GM10248 (cell line): ENCODE measurements at regions of chr2 and their contacts with region 1.

Region 1: GRCh38 chr2:20015472-20016083 is 3.1 kb upstream of the MATN3 start:
- DNase-seq: peak; percentile 58
- CTCF ChIP-seq: peak; percentile 45

Region 2: DNA sequence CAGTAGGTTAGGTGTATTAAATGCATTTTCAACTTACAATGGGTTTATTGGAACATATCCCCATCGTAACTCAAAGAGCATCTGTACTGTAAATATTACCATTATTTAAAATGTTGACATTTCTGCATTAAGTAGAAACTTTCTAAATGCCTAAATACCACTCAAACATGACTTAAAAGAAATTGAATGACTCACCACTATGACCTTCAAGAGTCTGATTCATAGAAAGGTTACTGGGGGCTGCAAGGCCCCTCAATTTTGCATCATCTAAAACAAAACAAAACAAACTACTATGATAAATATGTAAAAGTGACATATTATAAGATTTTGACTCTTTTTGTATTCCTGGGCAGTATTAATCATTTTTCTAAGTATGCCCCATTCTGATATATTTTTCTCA is 33.3 kb before region 1 on chr2:
- CTCF ChIA-PET with region 1: interaction called, 11 read pairs
- POLR2A ChIA-PET with region 1: no interaction called
- DNase-seq: no peak
- CTCF ChIP-seq: no peak

Region 3: DNA sequence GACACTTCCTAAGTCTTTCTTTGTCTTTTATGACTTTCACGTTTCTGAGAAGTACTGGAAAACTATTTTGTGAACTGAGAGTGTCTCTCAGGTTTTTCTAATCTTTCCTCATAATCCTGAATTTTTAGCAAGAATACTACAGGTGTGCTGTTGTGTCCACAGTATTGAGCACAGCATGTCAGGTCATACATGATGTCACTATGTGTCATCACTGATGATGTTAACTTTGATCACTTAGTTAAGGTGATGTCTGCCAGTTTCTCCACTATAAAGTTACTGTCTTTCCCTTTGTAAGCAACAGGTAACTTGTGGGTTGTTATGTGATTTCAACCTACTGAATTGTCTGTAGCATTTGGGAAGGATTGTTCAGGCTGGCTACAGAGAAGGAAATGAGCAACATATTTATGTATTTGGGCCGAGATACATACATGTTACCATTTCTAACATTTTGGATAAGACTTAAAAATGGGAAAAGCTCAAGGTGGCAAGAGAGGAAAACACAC is 14.2 kb before region 1 on chr2:
- CTCF ChIA-PET with region 1: interaction called, 35 read pairs
- POLR2A ChIA-PET with region 1: no interaction called
- DNase-seq: no peak
- CTCF ChIP-seq: no peak

Region 4: GRCh38 chr2:20051532-20052228 is 36.1 kb after region 1 on chr2 and contains the start of gene LAPTM4A:
- CTCF ChIA-PET with region 1: interaction called, 63 read pairs
- POLR2A ChIA-PET with region 1: no interaction called
- DNase-seq: peak; percentile 97
- CTCF ChIP-seq: no peak

Region 5: DNA sequence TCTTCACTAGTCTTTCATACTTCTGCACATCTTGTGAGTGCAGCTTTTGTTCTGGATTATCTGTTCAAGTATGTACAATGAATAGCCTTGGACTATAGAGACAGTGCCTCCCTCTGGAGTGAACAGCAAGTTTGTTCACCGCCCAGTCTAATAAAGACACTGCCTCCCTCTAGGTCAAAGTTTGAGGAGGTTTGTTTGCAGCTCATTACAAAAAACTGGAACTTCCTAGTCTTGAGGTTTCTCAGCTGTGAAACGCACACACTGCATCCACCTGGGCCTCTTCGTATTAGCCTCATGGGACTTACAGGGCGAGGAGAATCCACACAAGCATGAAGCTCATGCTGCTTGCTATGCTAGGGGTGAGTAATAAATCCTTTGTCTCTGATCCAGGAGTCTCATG is 61.9 kb after region 1 on chr2:
- CTCF ChIA-PET with region 1: interaction called, 15 read pairs
- POLR2A ChIA-PET with region 1: no interaction called
- DNase-seq: no peak
- CTCF ChIP-seq: no peak

Region 6: DNA sequence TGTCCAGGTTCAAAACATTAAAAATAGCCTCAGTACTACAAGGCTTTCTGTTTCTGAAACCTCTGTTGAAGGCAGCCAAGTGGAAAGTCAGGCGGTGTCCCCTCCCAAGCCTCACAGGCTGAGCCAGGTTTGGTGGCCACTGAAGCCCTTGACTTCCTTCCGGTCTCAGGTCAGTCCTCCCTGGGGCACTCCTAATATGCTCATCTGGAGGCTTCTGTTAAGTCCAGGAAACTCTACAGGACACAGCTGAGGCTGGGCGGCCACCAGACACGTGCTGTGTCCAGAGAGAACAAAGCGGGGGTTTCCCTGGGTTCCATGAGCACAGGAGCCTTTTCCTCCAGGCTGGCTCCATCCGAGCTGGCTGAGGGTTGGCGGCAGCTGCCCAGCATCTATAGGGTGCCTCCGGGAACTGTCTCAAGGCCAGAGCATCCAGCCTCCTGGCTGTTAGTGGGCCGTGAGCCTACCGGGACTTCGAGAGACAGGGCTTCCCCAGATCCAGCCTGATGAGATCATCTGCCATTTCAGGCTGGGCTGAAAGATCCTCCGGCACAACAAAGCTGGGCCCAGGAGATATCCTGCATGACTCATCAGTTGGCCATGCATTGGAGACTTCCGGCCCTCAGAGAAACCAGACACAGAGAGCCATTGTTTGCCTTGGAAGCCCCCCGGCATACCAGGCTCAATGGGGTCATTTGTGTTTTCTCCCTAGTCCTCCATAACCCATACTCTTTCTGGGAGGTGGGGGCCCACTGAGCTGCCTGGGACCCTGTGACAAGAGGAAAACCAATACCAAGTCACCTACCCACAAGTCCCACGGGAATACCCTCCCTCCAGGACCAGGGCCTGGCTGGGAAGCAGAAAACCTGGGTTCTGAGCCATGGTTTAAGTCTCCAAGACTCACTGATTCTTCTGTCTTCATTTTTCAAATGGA is 563.6 kb after region 1 on chr2:
- CTCF ChIA-PET with region 1: no interaction called
- POLR2A ChIA-PET with region 1: no interaction called
- DNase-seq: peak; percentile 75
- CTCF ChIP-seq: no peak